ENCODE measurements at regions of chr16 and their contacts with region 1.

Region 1: DNA sequence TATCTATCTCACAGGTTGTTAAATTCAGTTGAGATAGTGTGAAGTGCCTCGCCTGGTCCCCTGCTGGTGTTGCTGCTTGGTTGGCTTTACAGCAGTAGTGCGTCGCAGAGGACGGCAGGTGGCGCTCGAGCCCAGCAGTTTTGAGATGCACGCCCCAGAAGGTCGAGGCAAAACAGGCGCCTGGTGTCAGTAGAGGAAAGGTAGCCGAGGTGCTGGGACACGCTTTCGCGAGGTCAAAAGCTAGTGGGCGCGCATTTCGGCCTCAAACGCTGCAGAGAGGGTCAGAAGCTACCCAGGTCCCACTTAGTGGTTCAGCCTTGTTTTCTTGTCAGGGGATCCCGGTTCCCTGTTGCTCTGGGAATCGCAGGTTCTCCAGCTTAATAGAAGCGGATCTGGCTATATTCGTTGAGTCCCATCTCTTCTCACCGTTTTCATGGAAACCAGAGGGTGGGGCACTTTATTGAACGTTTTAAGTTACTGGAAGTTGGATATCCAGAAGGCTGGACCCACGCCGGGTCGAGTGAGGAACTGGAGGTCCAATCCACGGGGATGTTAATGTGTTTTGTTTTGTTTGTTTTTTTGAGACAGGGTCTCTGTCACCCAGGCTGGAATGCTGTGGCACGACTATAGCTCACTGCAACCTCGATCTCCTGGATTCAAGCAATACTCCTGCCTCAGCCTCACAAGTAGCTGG is 10.3 kb upstream of the ZFP90 start:
- DNase-seq: peak; percentile 88 to 92 (median 90)
- ATAC-seq: peak; percentile 94
- H3K4me3 ChIP-seq: no peak overlapping the region
- H3K4me1 ChIP-seq: peaks cover 19% of the 10 kb centered on the region
- CTCF ChIP-seq: peak; percentile 92

Region 2: GRCh38 chr16:69123910-69124309 is 595.1 kb after region 1 on chr16:
- intact Hi-C with region 1: loop called in 1 of 2 experiments (anchors 10 kb)
- DNase-seq: peak in 1 of 3 donors; percentile 78
- ATAC-seq: peak; percentile 80
- H3K4me3 ChIP-seq: no peak overlapping the region
- H3K4me1 ChIP-seq: no peaks in the 10 kb centered on the region
- CTCF ChIP-seq: peak; percentile 15

Measured in mucosa of descending colon (tissue), 3 donors.